ENCODE measurements at regions of chr3 and their contacts with region 1.

Region 1: DNA sequence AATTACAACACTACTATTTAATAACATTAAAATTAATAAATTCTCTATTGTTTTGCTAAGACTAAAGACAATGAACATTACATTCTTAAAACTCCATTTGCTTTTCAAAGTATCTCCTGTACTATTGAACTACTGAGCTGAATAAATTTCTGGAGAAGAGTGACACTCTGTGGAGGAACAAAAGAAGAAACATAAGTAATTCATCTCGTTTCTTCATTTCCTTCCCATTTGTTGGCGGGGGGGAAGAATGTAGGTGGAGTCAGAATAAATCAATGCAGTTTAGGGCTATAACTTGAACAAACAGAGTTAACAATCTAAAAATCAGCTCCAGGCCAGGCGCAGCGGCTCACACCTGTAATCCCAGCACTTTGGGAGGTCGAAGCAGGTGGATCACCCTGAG is 32.7 kb downstream of the EFHB start:
- DNase-seq: no peak
- CTCF ChIP-seq: no peak

Region 2: DNA sequence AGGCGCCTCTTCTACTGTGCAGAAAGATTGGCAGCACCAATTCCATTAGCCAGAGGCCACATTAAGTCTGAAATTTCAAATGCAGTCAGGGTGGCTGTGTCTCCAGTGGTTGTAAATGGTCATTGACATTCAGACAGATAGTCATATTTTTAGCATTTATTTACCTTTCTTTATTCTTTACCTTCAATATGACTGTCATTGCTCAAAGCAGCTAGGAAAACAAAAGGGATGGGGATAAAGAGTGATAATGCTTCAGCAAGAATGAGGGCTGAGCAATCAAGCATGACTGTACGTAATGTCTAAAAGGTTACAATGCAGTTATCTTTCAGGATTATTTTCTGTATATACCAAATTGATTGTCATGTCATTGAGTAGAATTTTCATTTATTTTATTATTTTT is 327.7 kb before region 1 on chr3:
- CTCF ChIA-PET with region 1: no interaction called
- POLR2A ChIA-PET with region 1: no interaction called
- DNase-seq: no peak
- CTCF ChIP-seq: no peak

Region 3: GRCh38 chr3:19885468-19885867 is 15.9 kb before region 1 on chr3:
- CTCF ChIA-PET with region 1: interaction called, 13 read pairs
- POLR2A ChIA-PET with region 1: no interaction called
- DNase-seq: peak; percentile 50
- CTCF ChIP-seq: peak; percentile 40

Region 4: GRCh38 chr3:19920401-19921075 is 19.2 kb after region 1 on chr3:
- CTCF ChIA-PET with region 1: no interaction called
- POLR2A ChIA-PET with region 1: no interaction called
- DNase-seq: no peak
- CTCF ChIP-seq: no peak

Region 5: GRCh38 chr3:20023623-20024405 is 122.5 kb after region 1 on chr3:
- CTCF ChIA-PET with region 1: no interaction called
- POLR2A ChIA-PET with region 1: no interaction called
- DNase-seq: no peak
- CTCF ChIP-seq: no peak